ENCODE measurements at regions of chr11 and their contacts with region 1.

Region 1: GRCh38 chr11:57345555-57346211 is 7.5 kb downstream of the P2RX3 start:
- DNase-seq: peak; percentile 64
- ATAC-seq: peak; percentile 55
- H3K4me3 ChIP-seq: peak overlapping the region in 1 of 3 experiments; percentile 20; a peak in 1 of 6 replicates
- H3K27ac ChIP-seq: no peak overlapping the region
- H3K4me1 ChIP-seq: peaks cover 65% of the 10 kb centered on the region
- H3K27me3 ChIP-seq: peaks cover 1 to 27% of the 10 kb centered on the region in 2 experiments; a peak in 4 of 5 replicates
- CTCF ChIP-seq: peak; percentile 83
- EP300 ChIP-seq: no peak
- POLR2A ChIP-seq: no peak
- RAD21 ChIP-seq: peak; percentile 47; the same call in 1 of the 2 replicates

Region 2: DNA sequence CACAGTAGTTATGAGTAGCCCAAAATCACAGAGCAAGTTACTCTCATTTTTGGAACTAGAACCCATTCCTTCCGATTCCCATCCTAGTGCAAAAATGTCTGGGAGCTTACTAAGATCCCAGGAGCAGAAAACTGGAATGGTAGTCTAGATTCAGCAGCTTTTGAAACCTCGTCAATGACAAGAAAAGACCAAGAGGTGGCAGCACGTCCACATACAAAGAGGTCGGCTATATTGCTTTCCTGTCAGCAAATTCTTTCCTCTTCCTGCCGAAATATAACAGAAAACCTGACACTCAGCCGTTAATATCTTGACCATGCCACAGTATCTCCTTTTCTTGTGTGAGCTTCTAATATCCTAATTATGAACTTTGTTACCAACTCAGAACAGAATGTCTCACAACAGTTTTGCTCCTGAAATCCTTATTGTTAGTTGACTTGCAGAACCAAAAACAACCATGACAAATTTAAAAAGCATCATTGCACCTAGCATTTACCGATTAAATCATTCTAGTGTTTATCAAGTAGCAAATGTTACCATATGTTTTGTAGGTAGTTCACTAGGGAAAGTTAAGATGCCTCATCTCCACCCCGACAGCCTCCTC is 504.4 kb before region 1 on chr11:
- CTCF ChIA-PET with region 1: no interaction called
- POLR2A ChIA-PET with region 1: no interaction called
- in situ Hi-C with region 1: loop called (anchors 10 kb)
- intact Hi-C with region 1: loop called (anchors 2 kb)
- DNase-seq: peak; percentile 52
- ATAC-seq: peak; percentile 63
- H3K4me3 ChIP-seq: no peak overlapping the region
- H3K27ac ChIP-seq: no peak overlapping the region
- H3K4me1 ChIP-seq: no peaks in the 10 kb centered on the region
- H3K27me3 ChIP-seq: peaks cover 0 to 7% of the 10 kb centered on the region in 2 experiments; a peak in 1 of 5 replicates
- CTCF ChIP-seq: peak; percentile 81
- EP300 ChIP-seq: no peak
- POLR2A ChIP-seq: no peak
- RAD21 ChIP-seq: peak; percentile 48; the same call in 1 of the 2 replicates

Region 3: GRCh38 chr11:57277845-57278709 is 67.6 kb before region 1 on chr11:
- CTCF ChIA-PET with region 1: no interaction called
- POLR2A ChIA-PET with region 1: no interaction called
- in situ Hi-C with region 1: no loop called
- intact Hi-C with region 1: loop called (anchors 5 kb)
- DNase-seq: peak; percentile 24
- ATAC-seq: peak; percentile 95
- H3K4me3 ChIP-seq: no peak overlapping the region
- H3K27ac ChIP-seq: no peak overlapping the region
- H3K4me1 ChIP-seq: 0 out of 2 replicates have a peak, but pooled peaks cover 5% of the 10 kb centered on the region
- H3K27me3 ChIP-seq: peaks cover 0 to 8% of the 10 kb centered on the region in 2 experiments; a peak in 2 of 5 replicates
- CTCF ChIP-seq: peak; percentile 79
- EP300 ChIP-seq: no peak
- POLR2A ChIP-seq: no peak
- RAD21 ChIP-seq: no peak

Region 4: GRCh38 chr11:57434640-57435546 is 89.2 kb after region 1 on chr11:
- CTCF ChIA-PET with region 1: no interaction called
- POLR2A ChIA-PET with region 1: no interaction called
- in situ Hi-C with region 1: no loop called
- intact Hi-C with region 1: no loop called
- DNase-seq: peak; percentile 94
- ATAC-seq: peak; percentile 81
- H3K4me3 ChIP-seq: no peak overlapping the region; a peak in 1 of 6 replicates
- H3K27ac ChIP-seq: peak overlapping the region; percentile 24
- H3K4me1 ChIP-seq: peaks cover 76% of the 10 kb centered on the region
- H3K27me3 ChIP-seq: no peaks in the 10 kb centered on the region
- CTCF ChIP-seq: no peak
- EP300 ChIP-seq: peak; percentile 89 to 93; a peak in 3 of 4 replicates
- POLR2A ChIP-seq: no peak
- RAD21 ChIP-seq: no peak

Region 5: DNA sequence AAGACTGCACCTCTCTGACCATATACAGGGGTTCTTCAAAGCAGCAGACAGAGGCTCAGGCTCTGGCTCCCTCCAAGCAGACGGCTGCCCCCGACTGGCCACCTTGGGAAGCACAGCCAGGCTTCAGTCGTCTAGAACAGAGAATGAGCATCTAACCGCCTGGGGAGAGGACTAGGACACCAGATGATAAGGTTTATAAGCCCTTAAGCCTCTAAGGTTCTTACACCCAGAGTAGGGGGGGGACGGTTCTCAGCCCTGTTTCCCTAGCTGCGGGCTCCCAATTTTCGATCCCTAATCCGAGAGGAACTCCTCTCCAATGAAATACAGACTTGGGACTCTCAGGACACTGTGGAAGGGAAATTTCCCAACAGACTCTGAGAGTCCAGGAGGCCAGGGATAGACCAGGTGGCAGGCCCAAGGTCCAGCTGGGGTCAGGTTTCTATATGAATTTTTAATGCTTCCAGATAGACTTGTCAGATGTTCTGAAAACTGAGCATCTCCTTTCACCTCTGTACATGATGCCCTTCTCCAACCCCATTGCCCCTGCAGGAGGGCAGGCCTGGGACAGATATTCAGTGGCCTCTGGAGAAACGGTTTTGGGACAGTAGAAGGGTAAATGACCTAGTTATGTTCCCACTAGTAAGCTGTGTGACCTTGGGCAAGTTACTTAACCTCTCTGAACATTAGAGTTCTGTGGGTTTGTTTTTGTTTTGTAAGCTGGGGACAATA is 134.9 kb after region 1 on chr11:
- CTCF ChIA-PET with region 1: interaction called, 7 read pairs
- POLR2A ChIA-PET with region 1: interaction called, 3 read pairs
- in situ Hi-C with region 1: no loop called
- intact Hi-C with region 1: loop called (anchors 1 kb)
- DNase-seq: peak; percentile 61
- ATAC-seq: peak; percentile 71
- H3K4me3 ChIP-seq: peak overlapping the region in 1 of 3 experiments; percentile 28; a peak in 1 of 6 replicates
- H3K27ac ChIP-seq: peak overlapping the region; percentile 65
- H3K4me1 ChIP-seq: peaks cover 30% of the 10 kb centered on the region
- H3K27me3 ChIP-seq: no peaks in the 10 kb centered on the region
- CTCF ChIP-seq: peak; percentile 90
- EP300 ChIP-seq: no peak
- POLR2A ChIP-seq: no peak; a peak in 1 of 4 replicates
- RAD21 ChIP-seq: peak; percentile 23; the same call in 1 of the 2 replicates

Region 6: GRCh38 chr11:57567515-57568329 is 222.0 kb after region 1 on chr11 and contains the start of gene UBE2L6:
- CTCF ChIA-PET with region 1: no interaction called
- POLR2A ChIA-PET with region 1: no interaction called
- in situ Hi-C with region 1: loop called (anchors 10 kb)
- intact Hi-C with region 1: no loop called
- DNase-seq: no peak
- ATAC-seq: peak; percentile 89
- H3K4me3 ChIP-seq: peak within 1 kb of the TSS; percentile 82 to 98 (median 84)
- H3K27ac ChIP-seq: peak within 1 kb of the TSS; percentile 40
- H3K4me1 ChIP-seq: peaks cover 24% of the 10 kb centered on the region
- H3K27me3 ChIP-seq: no peaks in the 10 kb centered on the region; a peak in 1 of 5 replicates
- CTCF ChIP-seq: peak; percentile 95; the same call in 1 of the 2 replicates
- EP300 ChIP-seq: no peak
- POLR2A ChIP-seq: peak in 1 of 2 experiments; percentile 55; a peak in 1 of 4 replicates
- RAD21 ChIP-seq: no peak; the same call in 1 of the 2 replicates
- total RNA-seq, gene UBE2L6: 30.3 and 37.6 TPM in 2 replicates

Region 7: GRCh38 chr11:58524232-58525036 is 1178.8 kb after region 1 on chr11:
- CTCF ChIA-PET with region 1: no interaction called
- POLR2A ChIA-PET with region 1: no interaction called
- in situ Hi-C with region 1: no loop called
- intact Hi-C with region 1: loop called (anchors 2 kb)
- DNase-seq: peak; percentile 68
- ATAC-seq: peak; percentile 99
- H3K4me3 ChIP-seq: no peak overlapping the region; a peak in 1 of 6 replicates
- H3K27ac ChIP-seq: no peak overlapping the region
- H3K4me1 ChIP-seq: peaks cover 6% of the 10 kb centered on the region
- H3K27me3 ChIP-seq: 0 out of 5 replicates have a peak, but pooled peaks cover 0 to 4% of the 10 kb centered on the region in 2 experiments
- CTCF ChIP-seq: peak; percentile 70
- EP300 ChIP-seq: no peak
- POLR2A ChIP-seq: no peak
- RAD21 ChIP-seq: no peak